A549 (cell line): ENCODE measurements at regions of chr12 and their contacts with region 1.

Region 1: DNA sequence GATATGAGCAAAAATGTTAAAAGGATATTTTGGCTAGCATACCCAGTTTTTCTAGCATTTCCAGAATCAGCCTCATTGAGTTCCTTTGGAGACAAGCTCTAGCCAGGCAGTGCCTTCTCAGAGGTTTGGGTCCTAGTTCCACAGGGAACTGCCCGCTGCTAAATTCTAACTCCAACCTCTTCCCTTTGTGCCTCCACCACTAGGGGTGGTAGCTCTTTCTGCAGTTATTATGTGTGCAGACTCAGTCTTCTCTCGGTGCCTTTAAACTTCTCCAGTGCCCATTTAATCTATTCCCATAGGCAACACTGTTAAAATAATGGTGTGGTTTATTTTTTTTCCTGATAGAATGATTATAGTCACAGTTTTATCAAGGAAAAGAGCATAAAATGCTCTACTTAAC is 21.5 kb upstream of the SLC25A3 start:
- DNase-seq: peak; percentile 29 to 32
- ATAC-seq: peak; percentile 71 to 77; a peak in 4 of 6 replicates
- H3K4me3 ChIP-seq: no peak overlapping the region
- H3K27ac ChIP-seq: no peak overlapping the region
- H3K4me1 ChIP-seq: peaks cover 16% of the 10 kb centered on the region
- CTCF ChIP-seq: no peak
- EP300 ChIP-seq: no peak
- POLR2A ChIP-seq: no peak
- RAD21 ChIP-seq: no peak

Region 2: DNA sequence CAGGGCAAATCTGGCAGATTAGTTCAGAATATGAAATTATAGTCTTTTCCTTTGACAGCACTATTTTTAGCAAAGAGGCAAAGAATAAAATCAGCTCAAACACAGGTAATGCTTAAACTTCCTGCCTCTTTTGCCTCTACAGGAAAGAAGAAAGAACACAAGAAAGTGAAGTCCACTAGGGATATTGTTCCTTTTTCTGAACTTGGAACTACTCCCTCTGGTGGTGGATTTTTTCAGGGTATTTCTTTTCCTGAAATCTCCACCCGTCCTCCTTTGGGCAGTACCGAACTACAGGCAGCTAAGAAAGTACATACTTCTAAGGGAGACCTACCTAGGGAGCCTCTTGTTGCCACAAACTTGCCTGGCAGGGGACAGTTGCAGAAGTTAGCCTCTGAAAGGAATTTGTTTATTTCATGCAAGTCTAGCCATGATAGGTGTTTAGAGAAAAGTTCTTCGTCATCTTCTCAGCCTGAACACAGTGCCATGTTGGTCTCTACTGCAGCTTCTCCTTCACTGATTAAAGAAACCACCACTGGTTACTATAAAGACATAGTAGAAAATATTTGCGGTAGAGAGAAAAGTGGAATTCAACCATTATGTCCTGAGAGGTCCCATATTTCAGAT is 39.2 kb before region 1 on chr12:
- CTCF ChIA-PET with region 1: interaction called, 16 read pairs
- POLR2A ChIA-PET with region 1: no interaction called
- DNase-seq: peak; percentile 49 to 79
- ATAC-seq: peak; percentile 91 to 93
- H3K4me3 ChIP-seq: no peak overlapping the region
- H3K27ac ChIP-seq: peak overlapping the region; percentile 1 to 64; a peak in 3 of 6 replicates
- H3K4me1 ChIP-seq: peaks cover 19% of the 10 kb centered on the region; the same call in 2 of the 3 replicates
- CTCF ChIP-seq: peak; percentile 83
- EP300 ChIP-seq: no peak
- POLR2A ChIP-seq: no peak
- RAD21 ChIP-seq: peak; percentile 37 to 45; a peak in 4 of 5 replicates

Region 3: GRCh38 chr12:98593351-98594049 is 21.5 kb after region 1 on chr12 and contains the start of gene SLC25A3:
- CTCF ChIA-PET with region 1: interaction called, 26 read pairs
- POLR2A ChIA-PET with region 1: interaction called, 8 read pairs
- DNase-seq: peak; percentile 92 to 100
- ATAC-seq: peak; percentile 99
- H3K4me3 ChIP-seq: peak within 1 kb of the TSS; percentile 85
- H3K27ac ChIP-seq: peak within 1 kb of the TSS; percentile 96 to 97
- H3K4me1 ChIP-seq: peaks cover 24% of the 10 kb centered on the region
- CTCF ChIP-seq: no peak
- EP300 ChIP-seq: no peak
- POLR2A ChIP-seq: peak; percentile 99
- RAD21 ChIP-seq: no peak
- polyA plus RNA-seq, gene SLC25A3: 1,065 and 1,232 TPM in 2 replicates

Region 4: GRCh38 chr12:98606357-98606988 is 34.5 kb after region 1 on chr12:
- CTCF ChIA-PET with region 1: interaction called, 22 read pairs
- POLR2A ChIA-PET with region 1: no interaction called
- DNase-seq: no peak
- ATAC-seq: peak; percentile 32 to 33; a peak in 4 of 6 replicates
- H3K4me3 ChIP-seq: no peak overlapping the region
- H3K27ac ChIP-seq: no peak overlapping the region
- H3K4me1 ChIP-seq: no peaks in the 10 kb centered on the region
- CTCF ChIP-seq: no peak; the same call in 2 of the 3 replicates
- EP300 ChIP-seq: no peak
- POLR2A ChIP-seq: no peak
- RAD21 ChIP-seq: peak; percentile 26 to 36; a peak in 2 of 5 replicates

Region 5: DNA sequence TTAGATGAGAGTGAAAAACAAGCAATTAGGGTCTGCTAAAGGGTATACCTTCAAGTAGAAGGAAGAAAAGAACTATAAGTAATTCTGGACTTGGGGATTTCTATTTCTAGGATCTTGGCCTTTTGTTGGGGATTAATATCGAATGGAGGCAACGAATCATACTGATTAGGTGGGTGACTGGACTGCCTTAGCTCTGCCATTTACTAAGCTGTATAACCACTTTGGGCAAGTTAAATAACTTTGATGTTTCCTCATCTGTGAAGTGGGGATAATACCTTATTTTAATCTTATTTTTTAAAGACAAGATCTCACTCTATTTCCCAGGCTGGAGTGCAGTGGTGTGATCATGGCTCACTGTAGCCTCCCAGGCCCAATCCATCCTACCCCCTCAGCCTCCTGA is 66.0 kb after region 1 on chr12:
- CTCF ChIA-PET with region 1: interaction called, 10 read pairs
- POLR2A ChIA-PET with region 1: no interaction called
- DNase-seq: no peak
- ATAC-seq: no peak
- H3K4me3 ChIP-seq: no peak overlapping the region
- H3K27ac ChIP-seq: no peak overlapping the region
- H3K4me1 ChIP-seq: peaks cover 28% of the 10 kb centered on the region
- CTCF ChIP-seq: no peak
- EP300 ChIP-seq: no peak
- POLR2A ChIP-seq: no peak
- RAD21 ChIP-seq: no peak

Region 6: GRCh38 chr12:98653866-98654493 is 82.0 kb after region 1 on chr12:
- CTCF ChIA-PET with region 1: interaction called, 80 read pairs
- POLR2A ChIA-PET with region 1: no interaction called
- DNase-seq: peak; percentile 33 to 77
- ATAC-seq: peak; percentile 64 to 83; a peak in 3 of 6 replicates
- H3K4me3 ChIP-seq: no peak overlapping the region
- H3K27ac ChIP-seq: no peak overlapping the region
- H3K4me1 ChIP-seq: no peaks in the 10 kb centered on the region
- CTCF ChIP-seq: peak; percentile 88
- EP300 ChIP-seq: no peak
- POLR2A ChIP-seq: no peak
- RAD21 ChIP-seq: peak; percentile 91 to 94

Region 7: GRCh38 chr12:98998697-98999299 is 426.8 kb after region 1 on chr12:
- CTCF ChIA-PET with region 1: interaction called, 11 read pairs
- POLR2A ChIA-PET with region 1: no interaction called
- DNase-seq: peak; percentile 47 to 73
- ATAC-seq: peak; percentile 81 to 94
- H3K4me3 ChIP-seq: no peak overlapping the region
- H3K27ac ChIP-seq: no peak overlapping the region
- H3K4me1 ChIP-seq: no peaks in the 10 kb centered on the region
- CTCF ChIP-seq: peak; percentile 88
- EP300 ChIP-seq: no peak
- POLR2A ChIP-seq: no peak
- RAD21 ChIP-seq: peak; percentile 91